ENCODE measurements at regions of chr6 and their contacts with region 1.

Region 1: GRCh38 chr6:149094156-149094555 is 223.4 kb upstream of the TAB2 start:
- DNase-seq: peak; percentile 51
- H3K4me3 Mint-ChIP-seq: peak overlapping the region; percentile 45
- H3K27ac Mint-ChIP-seq: peak overlapping the region; percentile 93
- H3K4me1 Mint-ChIP-seq: peaks cover 67% of the 10 kb centered on the region
- H3K27me3 Mint-ChIP-seq: no peaks in the 10 kb centered on the region

Region 2: GRCh38 chr6:149082286-149082707 is 11.9 kb before region 1 on chr6:
- CTCF ChIA-PET with region 1: interaction called, 14 read pairs
- POLR2A ChIA-PET with region 1: interaction called, 42 read pairs
- intact Hi-C with region 1: loop called (anchors 1 kb)
- DNase-seq: peak; percentile 93
- H3K4me3 Mint-ChIP-seq: no peak overlapping the region
- H3K27ac Mint-ChIP-seq: peak overlapping the region; percentile 26
- H3K4me1 Mint-ChIP-seq: peaks cover 79% of the 10 kb centered on the region
- H3K27me3 Mint-ChIP-seq: no peaks in the 10 kb centered on the region

Region 3: DNA sequence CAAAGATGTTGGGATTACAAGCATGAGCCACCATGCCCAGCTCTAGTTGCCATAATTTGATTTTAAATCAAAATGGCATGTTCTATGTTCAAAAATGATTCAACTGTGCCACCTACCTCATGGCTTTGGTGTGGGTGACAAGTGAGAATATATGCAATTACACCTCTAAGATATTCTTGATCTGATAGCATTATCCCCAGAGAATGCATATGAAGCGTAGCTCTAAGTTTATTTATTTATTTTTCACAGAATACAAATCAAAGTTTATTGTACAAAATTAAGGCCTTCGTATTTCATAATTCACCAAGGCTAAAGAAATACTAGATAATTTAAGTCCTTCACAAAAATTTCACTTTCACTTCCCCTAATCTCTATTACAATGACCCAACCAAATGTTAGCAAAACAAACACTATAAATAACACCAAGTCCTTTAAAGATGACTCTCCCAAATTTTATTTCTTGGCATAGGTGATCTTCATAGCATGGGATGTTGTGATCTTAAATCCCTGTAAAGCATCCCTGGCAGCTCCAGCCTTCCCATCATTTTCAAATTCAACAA is 17.5 kb after region 1 on chr6:
- CTCF ChIA-PET with region 1: interaction called, 4 read pairs
- POLR2A ChIA-PET with region 1: interaction called, 6 read pairs
- intact Hi-C with region 1: loop called (anchors 1 kb)
- DNase-seq: no peak
- H3K4me3 Mint-ChIP-seq: no peak overlapping the region
- H3K27ac Mint-ChIP-seq: no peak overlapping the region
- H3K4me1 Mint-ChIP-seq: peaks cover 39% of the 10 kb centered on the region
- H3K27me3 Mint-ChIP-seq: no peaks in the 10 kb centered on the region

Region 4: GRCh38 chr6:149129371-149130077 is 35.4 kb after region 1 on chr6:
- CTCF ChIA-PET with region 1: no interaction called
- POLR2A ChIA-PET with region 1: no interaction called
- intact Hi-C with region 1: loop called (anchors 2 kb)
- DNase-seq: peak; percentile 64
- H3K4me3 Mint-ChIP-seq: no peak overlapping the region
- H3K27ac Mint-ChIP-seq: peak overlapping the region; percentile 90
- H3K4me1 Mint-ChIP-seq: peaks cover 65% of the 10 kb centered on the region
- H3K27me3 Mint-ChIP-seq: no peaks in the 10 kb centered on the region

Measured in activated CD4-positive, alpha-beta memory T cell treated with anti-CD3 and anti-CD28 coated beads for 36 hours (primary cell).